ENCODE measurements at regions of chr7 and their contacts with region 1.

Region 1: GRCh38 chr7:73342645-73343044 is 14.7 kb downstream of the FKBP6 start:
- DNase-seq: no peak

Region 2: GRCh38 chr7:73446682-73447081 is 104.0 kb after region 1 on chr7:
- in situ Hi-C with region 1: loop called (anchors 5 kb)
- DNase-seq: peak; percentile 87